ENCODE measurements at regions of chr14 and their contacts with region 1.

Region 1: DNA sequence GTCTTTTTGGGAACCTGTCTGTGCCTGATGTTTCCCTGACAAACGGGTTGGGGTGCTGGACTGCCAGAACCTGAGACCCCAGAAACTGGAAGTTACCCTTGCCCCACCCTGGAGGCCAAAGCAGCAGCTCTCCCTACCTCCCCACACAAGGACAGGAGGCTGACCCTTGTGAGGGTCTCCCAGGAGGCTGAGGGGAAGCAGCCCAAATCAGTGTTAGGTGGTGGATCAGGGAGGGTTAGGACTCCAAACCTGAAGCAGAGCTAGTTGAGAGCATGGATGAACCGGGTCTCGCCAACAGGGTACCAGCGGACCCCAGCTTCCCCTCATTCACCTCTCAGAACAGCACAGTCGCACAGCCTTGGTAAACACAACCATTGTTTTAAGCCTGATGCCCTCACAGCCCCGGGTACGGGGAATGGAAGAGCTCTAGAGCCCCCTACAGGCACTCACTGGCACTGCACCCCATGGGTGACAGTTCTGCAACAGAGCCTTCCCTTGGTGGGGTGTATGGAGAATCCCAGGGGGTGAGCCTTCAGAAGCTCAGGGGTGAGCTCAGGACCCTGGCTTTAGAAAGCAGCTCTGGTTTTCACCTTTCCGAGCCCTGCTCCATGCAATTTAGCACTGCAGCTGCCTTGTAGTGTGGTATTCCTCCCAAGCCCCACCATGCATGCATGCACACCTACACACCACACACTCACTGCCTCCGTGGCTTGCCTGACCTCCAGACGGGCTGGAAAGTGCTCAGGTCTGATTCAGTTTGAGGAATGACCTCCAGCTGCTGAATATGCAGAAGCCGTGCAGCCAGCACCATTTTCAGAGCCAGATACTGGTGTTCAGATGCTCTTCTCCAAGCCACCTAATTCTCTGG is 11.2 kb downstream of the ESRRB start:
- DNase-seq: no peak
- H3K4me3 ChIP-seq: no peak overlapping the region
- CTCF ChIP-seq: peak; percentile 95

Region 2: GRCh38 chr14:76056128-76056527 is 331.0 kb before region 1 on chr14:
- CTCF ChIA-PET with region 1: interaction called, 104 read pairs
- POLR2A ChIA-PET with region 1: no interaction called
- DNase-seq: no peak
- H3K4me3 ChIP-seq: no peak overlapping the region
- CTCF ChIP-seq: peak; percentile 45

Region 3: DNA sequence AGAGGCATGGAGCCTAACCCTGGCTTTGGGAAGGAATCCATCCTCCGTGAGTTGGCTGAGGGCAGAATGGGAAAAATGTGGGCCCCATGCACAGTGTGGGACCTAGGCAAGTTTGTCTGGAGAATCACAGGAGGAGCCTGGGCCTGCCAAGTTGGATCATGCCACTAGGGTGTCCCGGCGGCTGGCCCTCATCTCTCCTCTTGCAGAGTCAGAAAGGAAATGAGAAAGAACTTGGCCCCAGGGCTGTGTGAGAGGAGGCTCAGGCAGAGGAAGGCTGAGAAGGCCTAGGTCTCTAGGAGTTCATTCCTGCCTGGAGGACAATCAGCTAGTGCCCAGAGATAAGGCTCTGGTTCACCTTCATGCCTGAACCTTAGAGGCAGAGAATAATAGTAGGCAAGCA is 13.7 kb before region 1 on chr14:
- CTCF ChIA-PET with region 1: interaction called, 12 read pairs
- POLR2A ChIA-PET with region 1: no interaction called
- DNase-seq: no peak
- H3K4me3 ChIP-seq: no peak overlapping the region
- CTCF ChIP-seq: no peak

Measured in AG04449 (cell line).